ENCODE measurements at regions of chr15 and their contacts with region 1.

Region 1: DNA sequence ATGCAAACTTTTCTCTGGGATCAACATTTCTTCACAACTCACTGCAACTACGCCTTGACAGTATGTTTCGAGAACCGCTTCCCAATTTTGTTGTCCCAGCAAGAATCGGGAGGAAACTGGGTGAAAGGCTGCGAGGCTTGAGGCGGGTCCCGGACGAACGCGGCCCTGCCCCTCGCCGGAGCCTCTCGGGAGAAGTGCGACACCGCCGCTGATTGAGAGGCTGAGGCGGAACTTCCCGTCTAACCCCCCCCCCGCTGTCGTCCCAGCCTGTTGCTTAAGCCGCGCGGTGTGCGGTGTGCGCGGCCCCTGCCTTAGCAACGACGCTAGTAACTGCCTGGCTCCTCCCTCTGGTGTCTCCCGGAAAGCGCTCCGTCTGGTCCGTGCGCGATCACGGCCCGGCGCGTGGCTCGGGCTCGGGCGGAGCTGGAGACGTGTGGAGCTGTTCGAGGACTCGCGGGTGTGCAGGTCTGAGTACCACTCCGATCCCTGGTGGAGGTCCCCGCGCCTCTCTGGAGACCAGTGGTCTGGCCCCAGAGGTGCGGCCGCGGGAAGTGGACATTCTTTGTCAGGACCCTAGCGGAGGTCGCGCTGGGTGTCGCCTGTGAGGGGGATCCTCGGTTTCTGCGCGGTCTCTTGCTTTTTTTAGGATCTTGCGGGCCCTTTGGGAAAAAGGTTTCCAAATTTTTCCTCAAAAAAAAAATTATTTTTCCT is at the starts of genes DTWD1 and FAM227B:
- DNase-seq: peak; percentile 85 to 94 (median 93)
- ATAC-seq: peak; percentile 99
- H3K4me3 ChIP-seq: peak within 1 kb of the TSS; percentile 78
- H3K4me3 Mint-ChIP-seq: peak within 1 kb of the TSS; percentile 85 to 99 (median 96)
- H3K27ac ChIP-seq: peak within 1 kb of the TSS; percentile 88
- H3K27ac Mint-ChIP-seq: peak within 1 kb of the TSS; percentile 93 to 99 (median 98)
- H3K4me1 ChIP-seq: peaks cover 17% of the 10 kb centered on the region in 2 donors
- H3K4me1 Mint-ChIP-seq: peaks cover 19 to 63% (median 48%) of the 10 kb centered on the region in 7 donors
- H3K27me3 ChIP-seq: no peaks in the 10 kb centered on the region
- H3K27me3 Mint-ChIP-seq: no peaks in the 10 kb centered on the region
- total RNA-seq, gene DTWD1: 14.3 to 31.0 (median 20.1) TPM
- total RNA-seq, gene FAM227B: 3.7 to 16.5 (median 8.2) TPM

Region 2: GRCh38 chr15:48330855-48331795 is 1289.7 kb before region 1 on chr15 and contains the start of gene DUT:
- CTCF ChIA-PET with region 1: no interaction called
- POLR2A ChIA-PET with region 1: no interaction called
- intact Hi-C with region 1: loop called (anchors 1 to 2 kb)
- DNase-seq: peak; percentile 65 to 85 (median 79)
- ATAC-seq: peak; percentile 87
- H3K4me3 ChIP-seq: peak within 1 kb of the TSS; percentile 87
- H3K4me3 Mint-ChIP-seq: peak within 1 kb of the TSS; percentile 94 to 100 (median 98)
- H3K27ac ChIP-seq: peak within 1 kb of the TSS; percentile 93
- H3K27ac Mint-ChIP-seq: peak within 1 kb of the TSS; percentile 94 to 100 (median 99)
- H3K4me1 ChIP-seq: peaks cover 12 to 13% of the 10 kb centered on the region in 2 donors
- H3K4me1 Mint-ChIP-seq: peaks cover 13 to 46% (median 24%) of the 10 kb centered on the region in 7 donors
- H3K27me3 ChIP-seq: no peaks in the 10 kb centered on the region
- H3K27me3 Mint-ChIP-seq: peaks cover 0 to 2% (median 0%) of the 10 kb centered on the region in 5 donors
- total RNA-seq, gene DUT: 54.7 to 219 (median 116) TPM

Region 3: DNA sequence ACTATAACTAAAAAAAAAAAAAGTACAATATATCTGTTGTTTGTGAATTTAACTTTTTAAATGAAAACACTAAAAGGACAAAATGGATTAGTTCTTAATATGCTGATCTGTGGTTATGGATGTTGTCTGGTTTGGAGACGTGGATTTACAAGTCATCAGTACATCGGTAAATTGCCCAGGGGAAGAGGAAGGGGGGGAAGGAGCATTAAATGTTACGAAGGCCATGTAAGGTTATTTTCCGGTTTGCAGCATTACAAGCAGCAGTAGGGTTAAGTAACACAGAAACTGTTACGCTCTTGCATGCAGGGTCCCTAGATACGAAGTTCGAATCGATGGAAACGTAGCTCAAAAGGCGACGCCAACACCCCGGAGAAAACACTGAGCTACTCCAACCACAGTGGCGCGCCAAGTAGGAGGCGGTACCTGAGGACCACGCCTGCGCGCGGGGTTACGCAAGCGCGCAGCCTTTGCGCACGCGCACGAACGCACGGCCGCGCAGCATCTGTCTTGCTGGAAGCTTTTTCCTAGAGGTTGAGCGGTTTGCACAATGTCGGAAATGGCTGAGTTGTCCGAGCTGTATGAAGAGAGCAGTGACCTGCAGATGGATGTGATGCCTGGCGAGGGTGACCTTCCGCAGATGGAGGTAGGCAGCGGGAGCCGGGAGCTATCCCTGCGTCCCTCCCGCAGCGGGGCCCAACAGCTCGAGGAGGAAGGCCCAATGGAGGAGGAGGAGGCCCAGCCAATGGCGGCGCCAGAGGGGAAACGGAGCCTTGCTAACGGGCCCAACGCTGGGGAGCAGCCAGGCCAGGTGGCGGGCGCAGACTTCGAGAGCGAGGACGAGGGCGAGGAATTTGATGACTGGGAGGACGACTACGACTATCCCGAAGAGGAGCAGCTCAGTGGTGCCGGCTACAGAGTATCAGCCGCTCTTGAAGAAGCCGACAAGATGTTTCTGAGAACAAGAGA is 742.9 kb before region 1 on chr15 and contains the start of gene EID1:
- CTCF ChIA-PET with region 1: no interaction called
- POLR2A ChIA-PET with region 1: interaction called, 4 read pairs
- intact Hi-C with region 1: loop called (anchors 1 to 5 kb)
- DNase-seq: peak; percentile 87 to 94 (median 92)
- ATAC-seq: peak; percentile 95
- H3K4me3 ChIP-seq: peak within 1 kb of the TSS; percentile 75
- H3K4me3 Mint-ChIP-seq: peak within 1 kb of the TSS; percentile 93 to 100 (median 99)
- H3K27ac ChIP-seq: peak within 1 kb of the TSS; percentile 70
- H3K27ac Mint-ChIP-seq: peak within 1 kb of the TSS; percentile 95 to 99 (median 98)
- H3K4me1 ChIP-seq: peaks cover 4 to 17% of the 10 kb centered on the region in 2 donors
- H3K4me1 Mint-ChIP-seq: peaks cover 11 to 48% (median 26%) of the 10 kb centered on the region in 7 donors
- H3K27me3 ChIP-seq: no peaks in the 10 kb centered on the region
- H3K27me3 Mint-ChIP-seq: peaks cover 0 to 25% (median 15%) of the 10 kb centered on the region in 5 donors
- total RNA-seq, gene EID1: 40.3 to 96.0 (median 56.5) TPM

Region 4: DNA sequence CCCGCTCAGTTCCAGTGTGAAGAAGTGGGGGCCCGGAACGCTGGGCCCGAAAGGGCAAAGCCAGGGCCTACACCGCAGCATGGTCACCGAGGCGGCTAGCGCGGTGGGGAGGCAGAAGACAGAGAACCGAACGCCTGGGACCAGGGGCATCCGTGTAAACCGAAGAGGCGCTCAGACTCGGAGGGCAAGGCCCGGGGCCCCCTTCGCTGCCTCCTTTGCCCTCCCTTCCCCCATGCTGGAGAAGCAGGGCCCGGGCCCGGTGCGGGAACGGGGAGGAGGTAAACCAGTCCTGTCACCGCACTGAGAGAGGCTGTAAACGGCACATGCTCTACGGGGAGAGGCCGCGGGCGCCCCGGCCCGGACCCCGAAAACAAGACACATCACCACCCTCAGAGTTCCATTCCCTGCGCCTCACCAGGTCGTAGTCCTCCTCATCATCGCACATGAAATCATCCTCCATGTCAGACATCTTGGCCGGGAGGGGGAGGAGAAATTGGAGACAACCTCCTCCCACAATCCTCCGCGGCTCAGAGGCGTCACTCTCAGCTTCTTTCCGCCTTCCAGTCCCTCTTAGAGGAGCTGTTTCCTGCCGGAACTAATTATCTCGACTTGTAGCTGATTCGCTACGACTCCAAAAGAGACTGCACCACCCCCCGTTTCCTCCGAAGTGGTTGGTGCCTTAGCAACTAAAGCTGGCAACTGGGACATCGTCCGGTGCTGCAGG is 465.5 kb before region 1 on chr15 and contains the start of gene COPS2:
- CTCF ChIA-PET with region 1: no interaction called
- POLR2A ChIA-PET with region 1: interaction called, 15 read pairs
- intact Hi-C with region 1: loop called (anchors 1 kb)
- DNase-seq: peak; percentile 69 to 96 (median 94)
- ATAC-seq: peak; percentile 99
- H3K4me3 ChIP-seq: peak within 1 kb of the TSS; percentile 88
- H3K4me3 Mint-ChIP-seq: peak within 1 kb of the TSS; percentile 95 to 100 (median 98)
- H3K27ac ChIP-seq: peak within 1 kb of the TSS; percentile 93
- H3K27ac Mint-ChIP-seq: peak within 1 kb of the TSS; percentile 93 to 100 (median 97)
- H3K4me1 ChIP-seq: peaks cover 9 to 25% of the 10 kb centered on the region in 2 donors
- H3K4me1 Mint-ChIP-seq: peaks cover 40 to 72% (median 59%) of the 10 kb centered on the region in 7 donors
- H3K27me3 ChIP-seq: no peaks in the 10 kb centered on the region
- H3K27me3 Mint-ChIP-seq: no peaks in the 10 kb centered on the region
- total RNA-seq, gene COPS2: 51.0 to 91.5 (median 63.6) TPM

Region 5: GRCh38 chr15:50107591-50108408 is 487.0 kb after region 1 on chr15:
- CTCF ChIA-PET with region 1: no interaction called
- POLR2A ChIA-PET with region 1: no interaction called
- intact Hi-C with region 1: loop called in 1 of 2 experiments (anchors 2 kb)
- DNase-seq: peak in 1 of 9 donors; percentile 42
- ATAC-seq: peak; percentile 90
- H3K4me3 ChIP-seq: no peak overlapping the region
- H3K4me3 Mint-ChIP-seq: peak overlapping the region in 2 of 10 donors; percentile 33 to 80
- H3K27ac ChIP-seq: no peak overlapping the region
- H3K27ac Mint-ChIP-seq: peak overlapping the region in 2 of 9 donors; percentile 15 to 96
- H3K4me1 ChIP-seq: peaks cover 4 to 19% of the 10 kb centered on the region in 2 donors
- H3K4me1 Mint-ChIP-seq: peaks cover 21 to 73% (median 35%) of the 10 kb centered on the region in 7 donors
- H3K27me3 ChIP-seq: no peaks in the 10 kb centered on the region
- H3K27me3 Mint-ChIP-seq: peaks cover 0 to 22% (median 0%) of the 10 kb centered on the region in 5 donors

Region 6: DNA sequence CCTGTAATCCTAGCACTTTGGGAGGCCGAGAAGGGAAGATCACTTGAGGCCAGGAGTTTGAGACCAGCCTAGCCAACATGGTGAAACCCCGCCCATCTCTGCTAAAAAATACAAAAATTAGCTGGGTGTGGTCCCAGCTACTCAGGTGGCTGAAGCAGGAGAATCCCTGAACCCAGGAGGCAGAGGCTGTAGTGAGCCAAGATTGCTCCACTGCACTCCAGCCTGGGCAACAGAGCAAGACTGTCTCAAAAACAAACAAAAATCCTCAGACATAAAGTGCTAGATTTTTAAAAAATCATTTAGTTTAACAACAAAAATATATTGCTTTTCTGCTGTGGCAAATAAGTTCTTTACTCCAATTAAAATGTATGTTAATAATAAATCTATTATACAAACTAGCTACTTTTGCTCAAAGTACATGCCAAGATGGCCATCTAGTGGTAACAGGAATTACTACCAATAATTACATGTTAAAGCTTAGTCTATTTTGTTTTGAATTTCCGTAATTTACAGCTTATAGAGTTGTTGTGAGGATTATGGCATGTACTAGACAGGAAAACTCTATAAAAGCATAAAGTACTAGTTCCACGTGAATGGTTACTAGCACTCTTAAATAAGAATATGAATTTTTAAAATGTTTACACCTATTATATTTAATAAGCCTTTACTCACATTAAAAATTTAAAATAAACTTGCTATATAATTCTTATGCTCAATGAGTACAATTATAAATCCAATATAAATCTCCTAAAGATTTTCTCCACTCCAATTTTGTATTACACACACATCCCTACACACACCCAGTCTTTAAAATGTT is 695.2 kb after region 1 on chr15:
- CTCF ChIA-PET with region 1: no interaction called
- POLR2A ChIA-PET with region 1: no interaction called
- intact Hi-C with region 1: loop called in 1 of 2 experiments (anchors 10 kb)
- DNase-seq: peak in 7 of 9 donors; percentile 8 to 47 (median 30)
- ATAC-seq: peak; percentile 66
- H3K4me3 ChIP-seq: no peak overlapping the region
- H3K4me3 Mint-ChIP-seq: no peak overlapping the region
- H3K27ac ChIP-seq: no peak overlapping the region
- H3K27ac Mint-ChIP-seq: no peak overlapping the region
- H3K4me1 ChIP-seq: peaks cover 0 to 6% of the 10 kb centered on the region in 2 donors
- H3K4me1 Mint-ChIP-seq: peaks cover 12 to 34% (median 21%) of the 10 kb centered on the region in 7 donors
- H3K27me3 ChIP-seq: no peaks in the 10 kb centered on the region
- H3K27me3 Mint-ChIP-seq: no peaks in the 10 kb centered on the region

Region 7: DNA sequence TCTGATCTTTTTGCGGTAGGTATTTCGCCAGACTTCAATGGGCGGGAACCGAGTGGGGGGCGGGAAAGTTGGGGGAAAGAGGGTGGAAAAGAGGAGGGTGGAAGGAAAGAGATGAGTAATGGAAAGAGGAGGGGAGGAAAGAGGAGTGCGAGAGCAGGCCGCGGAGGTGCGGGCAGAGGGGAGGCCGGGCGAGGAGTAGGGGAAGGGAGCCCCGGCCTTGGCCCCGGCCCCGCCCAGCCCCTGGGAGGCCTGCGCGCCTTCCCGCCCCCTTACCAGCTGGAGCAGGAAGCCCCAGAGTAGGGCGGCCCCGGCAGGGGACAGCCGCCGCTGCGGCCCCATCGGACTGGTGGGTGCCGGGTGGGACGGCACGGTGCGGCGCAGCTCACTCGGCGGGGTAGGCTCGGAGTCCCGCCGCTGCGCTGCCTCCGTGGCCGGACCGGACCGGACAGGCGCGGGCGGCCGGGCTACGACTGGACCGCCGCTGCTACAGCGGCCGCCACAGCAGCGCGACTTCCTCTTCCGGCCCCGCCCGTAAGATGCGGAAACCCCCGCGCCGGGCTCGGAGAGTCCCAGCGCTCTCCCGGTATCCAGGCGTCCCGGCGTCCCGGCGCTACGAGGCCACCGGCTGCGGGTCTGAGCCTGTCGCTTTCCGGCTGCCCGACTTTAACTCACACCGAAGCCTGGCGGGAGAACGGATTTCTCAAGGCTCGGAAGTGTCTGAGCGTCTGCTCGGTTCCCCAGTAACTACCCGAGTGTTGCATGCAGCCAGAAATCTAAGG is 1144.6 kb after region 1 on chr15 and contains the start of gene SPPL2A:
- CTCF ChIA-PET with region 1: no interaction called
- POLR2A ChIA-PET with region 1: no interaction called
- intact Hi-C with region 1: loop called in 1 of 2 experiments (anchors 2 kb)
- DNase-seq: peak; percentile 45 to 90 (median 61)
- ATAC-seq: peak; percentile 91
- H3K4me3 ChIP-seq: peak within 1 kb of the TSS; percentile 77
- H3K4me3 Mint-ChIP-seq: peak within 1 kb of the TSS; percentile 81 to 97 (median 94)
- H3K27ac ChIP-seq: peak within 1 kb of the TSS; percentile 90
- H3K27ac Mint-ChIP-seq: peak within 1 kb of the TSS; percentile 85 to 98 (median 93)
- H3K4me1 ChIP-seq: no peaks in the 10 kb centered on the region
- H3K4me1 Mint-ChIP-seq: peaks cover 27 to 58% (median 51%) of the 10 kb centered on the region in 7 donors
- H3K27me3 ChIP-seq: no peaks in the 10 kb centered on the region
- H3K27me3 Mint-ChIP-seq: no peaks in the 10 kb centered on the region
- total RNA-seq, gene SPPL2A: 42.1 to 100 (median 58.1) TPM